ENCODE measurements at regions of chr17 and their contacts with region 1.

Region 1: GRCh38 chr17:49763735-49764558 is at the start of gene FAM117A:
- DNase-seq: peak; percentile 86 to 99 (median 97)
- ATAC-seq: peak; percentile 86 to 93 (median 91)
- H3K4me3 ChIP-seq: peak within 1 kb of the TSS; percentile 68 to 94
- H3K4me3 Mint-ChIP-seq: peak within 1 kb of the TSS; percentile 92 to 96 (median 96)
- H3K27ac ChIP-seq: peak within 1 kb of the TSS; percentile 66
- H3K27ac Mint-ChIP-seq: peak within 1 kb of the TSS; percentile 91 to 93
- H3K4me1 ChIP-seq: peaks cover 25 to 44% of the 10 kb centered on the region in 2 experiments
- H3K4me1 Mint-ChIP-seq: peaks cover 45 to 56% (median 52%) of the 10 kb centered on the region in 3 donors
- H3K27me3 ChIP-seq: no peaks in the 10 kb centered on the region
- H3K27me3 Mint-ChIP-seq: no peaks in the 10 kb centered on the region
- total RNA-seq, gene FAM117A: 71.9 to 105 (median 99.1) TPM

Region 2: GRCh38 chr17:49603720-49604119 is 160.2 kb before region 1 on chr17:
- CTCF ChIA-PET with region 1: no interaction called
- POLR2A ChIA-PET with region 1: no interaction called
- DNase-seq: no peak
- ATAC-seq: no peak
- H3K4me3 ChIP-seq: no peak overlapping the region
- H3K4me3 Mint-ChIP-seq: no peak overlapping the region
- H3K27ac ChIP-seq: no peak overlapping the region
- H3K27ac Mint-ChIP-seq: peak overlapping the region in 1 of 2 donors; percentile 11
- H3K4me1 ChIP-seq: no peaks in the 10 kb centered on the region
- H3K4me1 Mint-ChIP-seq: no peaks in the 10 kb centered on the region
- H3K27me3 ChIP-seq: no peaks in the 10 kb centered on the region
- H3K27me3 Mint-ChIP-seq: no peaks in the 10 kb centered on the region

Region 3: GRCh38 chr17:49707608-49708514 is 56.1 kb before region 1 on chr17 and contains the start of gene SLC35B1:
- CTCF ChIA-PET with region 1: interaction called in 1 of 2 experiments, 13 read pairs
- POLR2A ChIA-PET with region 1: interaction called, 3 to 17 read pairs
- DNase-seq: peak; percentile 91 to 100 (median 99)
- ATAC-seq: peak; percentile 96 to 99 (median 96)
- H3K4me3 ChIP-seq: peak within 1 kb of the TSS; percentile 68 to 97
- H3K4me3 Mint-ChIP-seq: peak within 1 kb of the TSS; percentile 91 to 97 (median 95)
- H3K27ac ChIP-seq: peak within 1 kb of the TSS; percentile 93
- H3K27ac Mint-ChIP-seq: peak within 1 kb of the TSS; percentile 97
- H3K4me1 ChIP-seq: peaks cover 9 to 33% of the 10 kb centered on the region in 2 experiments
- H3K4me1 Mint-ChIP-seq: peaks cover 35 to 55% (median 42%) of the 10 kb centered on the region in 3 donors
- H3K27me3 ChIP-seq: no peaks in the 10 kb centered on the region
- H3K27me3 Mint-ChIP-seq: no peaks in the 10 kb centered on the region
- total RNA-seq, gene SLC35B1: 40.5 to 57.1 (median 42.8) TPM

Region 4: GRCh38 chr17:49739641-49740271 is 24.2 kb before region 1 on chr17:
- CTCF ChIA-PET with region 1: interaction called, 3 to 11 read pairs
- POLR2A ChIA-PET with region 1: interaction called, 10 to 79 read pairs
- DNase-seq: peak; percentile 91 to 100 (median 99)
- ATAC-seq: peak; percentile 97 to 99 (median 98)
- H3K4me3 ChIP-seq: peak overlapping the region; percentile 46 to 63
- H3K4me3 Mint-ChIP-seq: peak overlapping the region; percentile 82 to 95 (median 89)
- H3K27ac ChIP-seq: peak overlapping the region; percentile 98
- H3K27ac Mint-ChIP-seq: peak overlapping the region; percentile 100
- H3K4me1 ChIP-seq: peaks cover 72 to 87% of the 10 kb centered on the region in 2 experiments
- H3K4me1 Mint-ChIP-seq: peaks cover 82 to 91% (median 86%) of the 10 kb centered on the region in 3 donors
- H3K27me3 ChIP-seq: no peaks in the 10 kb centered on the region
- H3K27me3 Mint-ChIP-seq: no peaks in the 10 kb centered on the region

Region 5: GRCh38 chr17:49788478-49789242 is 24.7 kb after region 1 on chr17 and contains the start of gene KAT7:
- CTCF ChIA-PET with region 1: interaction called in 1 of 2 experiments, 8 read pairs
- POLR2A ChIA-PET with region 1: interaction called, 4 to 30 read pairs
- DNase-seq: peak; percentile 92 to 100 (median 99)
- ATAC-seq: peak; percentile 84 to 88 (median 88)
- H3K4me3 ChIP-seq: peak within 1 kb of the TSS; percentile 95 to 99
- H3K4me3 Mint-ChIP-seq: peak within 1 kb of the TSS; percentile 89 to 99 (median 95)
- H3K27ac ChIP-seq: peak within 1 kb of the TSS; percentile 98
- H3K27ac Mint-ChIP-seq: peak within 1 kb of the TSS; percentile 98 to 99
- H3K4me1 ChIP-seq: peaks cover 16 to 30% of the 10 kb centered on the region in 2 experiments
- H3K4me1 Mint-ChIP-seq: peaks cover 58 to 62% (median 58%) of the 10 kb centered on the region in 3 donors
- H3K27me3 ChIP-seq: no peaks in the 10 kb centered on the region
- H3K27me3 Mint-ChIP-seq: no peaks in the 10 kb centered on the region
- total RNA-seq, gene KAT7: 96.8 to 197 (median 99.7) TPM

Region 6: DNA sequence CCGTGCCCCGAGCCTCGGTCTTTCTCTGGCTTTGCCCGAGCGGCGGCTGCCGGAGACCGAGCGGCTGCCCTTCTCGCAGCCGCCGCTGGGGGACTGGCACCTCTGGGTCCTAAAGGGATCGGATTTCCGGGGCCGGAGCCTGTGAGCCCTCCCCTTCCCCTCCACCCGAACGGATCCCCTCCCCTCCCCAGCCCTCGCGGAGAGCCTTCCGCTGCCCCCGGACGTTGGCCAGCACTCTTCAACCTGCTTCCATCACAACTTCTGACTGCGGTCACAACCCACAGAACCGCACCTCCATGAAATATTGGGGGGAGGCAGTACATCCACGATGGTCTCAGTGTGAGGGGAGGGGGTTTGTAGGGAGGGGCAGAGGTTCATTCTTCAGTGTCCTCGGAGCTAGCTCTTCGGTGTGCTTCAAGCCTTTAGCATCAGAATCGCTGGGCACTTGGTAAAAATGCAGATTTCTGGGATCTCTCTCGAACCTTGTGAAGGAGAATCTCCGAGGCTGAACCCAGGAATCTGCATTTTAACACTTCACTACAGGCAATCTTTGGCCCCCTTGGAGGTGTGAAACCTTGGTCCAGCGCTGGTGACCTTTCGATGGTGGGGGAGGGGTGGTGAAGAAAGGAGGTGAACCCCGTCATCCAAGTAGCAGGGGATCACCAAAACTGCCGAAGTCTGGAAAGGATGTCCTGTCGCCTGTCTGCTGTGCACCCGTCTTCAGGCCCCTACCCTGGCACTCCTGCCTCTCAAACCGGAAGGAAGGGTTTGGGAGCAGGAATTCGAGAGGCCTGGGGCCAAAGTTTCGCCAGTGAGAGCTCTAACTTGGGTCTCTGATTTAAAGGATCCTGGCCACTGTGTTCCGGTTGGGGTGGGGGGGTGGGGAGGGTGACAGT is 387.3 kb after region 1 on chr17:
- CTCF ChIA-PET with region 1: no interaction called
- POLR2A ChIA-PET with region 1: interaction called in 1 of 2 experiments, 13 read pairs
- DNase-seq: peak; percentile 64 to 89 (median 79)
- ATAC-seq: peak; percentile 66 to 74 (median 68)
- H3K4me3 ChIP-seq: peak overlapping the region; percentile 62 to 82
- H3K4me3 Mint-ChIP-seq: peak overlapping the region; percentile 82 to 96 (median 87)
- H3K27ac ChIP-seq: peak overlapping the region; percentile 67
- H3K27ac Mint-ChIP-seq: peak overlapping the region; percentile 88 to 94
- H3K4me1 ChIP-seq: peaks cover 22 to 53% of the 10 kb centered on the region in 2 experiments
- H3K4me1 Mint-ChIP-seq: peaks cover 37 to 46% (median 44%) of the 10 kb centered on the region in 3 donors
- H3K27me3 ChIP-seq: no peaks in the 10 kb centered on the region
- H3K27me3 Mint-ChIP-seq: no peaks in the 10 kb centered on the region

Region 7: GRCh38 chr17:51289696-51290111 is 1525.8 kb after region 1 on chr17:
- CTCF ChIA-PET with region 1: no interaction called
- POLR2A ChIA-PET with region 1: no interaction called
- DNase-seq: no peak
- ATAC-seq: no peak
- H3K4me3 ChIP-seq: no peak overlapping the region
- H3K4me3 Mint-ChIP-seq: no peak overlapping the region
- H3K27ac ChIP-seq: no peak overlapping the region
- H3K27ac Mint-ChIP-seq: no peak overlapping the region
- H3K4me1 ChIP-seq: no peaks in the 10 kb centered on the region
- H3K4me1 Mint-ChIP-seq: peaks cover 0 to 6% (median 1%) of the 10 kb centered on the region in 3 donors
- H3K27me3 ChIP-seq: no peaks in the 10 kb centered on the region
- H3K27me3 Mint-ChIP-seq: no peaks in the 10 kb centered on the region

Measured in T-cell (primary cell).